Activated CD4-positive, alpha-beta T cell treated with anti-CD3 and anti-CD28 coated beads for 36 hours (primary cell): ENCODE measurements at regions of chr18 and their contacts with region 1.

Region 1: DNA sequence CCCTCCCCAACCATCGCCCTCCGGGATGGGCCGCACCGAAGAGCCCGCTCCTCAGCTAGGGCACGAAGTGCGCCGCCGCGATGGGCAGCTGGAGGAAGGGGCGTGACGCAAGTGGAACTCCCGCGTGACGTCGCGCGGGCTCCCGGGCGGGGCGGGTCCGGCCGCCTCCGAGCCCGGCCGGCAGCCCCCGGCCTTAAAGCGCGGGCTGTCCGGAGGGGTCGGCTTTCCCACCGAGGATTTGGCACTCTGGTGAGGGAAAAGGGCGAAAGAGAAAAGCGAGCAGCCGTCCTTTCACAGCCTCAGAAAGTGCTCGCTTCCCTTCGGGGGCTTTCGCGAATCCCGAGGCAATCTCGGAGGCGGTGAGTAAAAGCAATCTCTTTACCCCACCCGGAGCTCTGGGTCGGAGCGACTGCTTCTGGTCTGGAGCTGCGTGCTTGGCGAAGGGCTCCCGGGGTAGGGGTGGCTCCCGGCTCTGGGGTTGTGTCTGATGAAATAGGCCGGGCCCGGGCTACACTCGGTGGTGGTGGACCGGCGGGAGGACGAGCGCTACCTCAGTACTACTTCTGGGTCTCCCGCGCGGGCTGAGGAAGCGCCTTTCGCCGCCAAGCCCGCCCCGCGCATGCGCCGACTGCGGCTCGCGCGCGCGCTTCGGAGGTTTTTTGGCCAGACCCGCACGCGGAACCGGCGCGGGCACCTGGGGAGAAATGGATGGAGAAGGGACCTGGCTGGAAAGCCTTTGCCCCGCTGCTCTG is at the start of gene RBBP8:
- DNase-seq: peak; percentile 89
- ATAC-seq: peak; percentile 76
- H3K4me3 Mint-ChIP-seq: peak within 1 kb of the TSS; percentile 89
- H3K27ac Mint-ChIP-seq: peak within 1 kb of the TSS; percentile 96
- H3K4me1 Mint-ChIP-seq: peaks cover 17% of the 10 kb centered on the region
- H3K27me3 Mint-ChIP-seq: no peaks in the 10 kb centered on the region
- total RNA-seq, gene RBBP8: 74.3 to 101 TPM

Region 2: GRCh38 chr18:21111341-21112139 is 1821.8 kb before region 1 on chr18 and contains the start of gene ROCK1:
- CTCF ChIA-PET with region 1: no interaction called
- POLR2A ChIA-PET with region 1: no interaction called
- intact Hi-C with region 1: loop called in 1 of 2 experiments (anchors 5 kb)
- DNase-seq: peak; percentile 99
- ATAC-seq: peak; percentile 86
- H3K4me3 Mint-ChIP-seq: no peak within 1 kb of the TSS
- H3K27ac Mint-ChIP-seq: peak within 1 kb of the TSS; percentile 98
- H3K4me1 Mint-ChIP-seq: peaks cover 3% of the 10 kb centered on the region
- H3K27me3 Mint-ChIP-seq: no peaks in the 10 kb centered on the region
- total RNA-seq, gene ROCK1: 47.1 to 55.5 TPM

Region 3: GRCh38 chr18:22813648-22814328 is 119.6 kb before region 1 on chr18:
- CTCF ChIA-PET with region 1: interaction called, 6 read pairs
- POLR2A ChIA-PET with region 1: no interaction called
- intact Hi-C with region 1: loop called in 1 of 2 experiments (anchors 2 kb)
- DNase-seq: peak; percentile 19
- ATAC-seq: no peak
- H3K4me3 Mint-ChIP-seq: no peak overlapping the region
- H3K27ac Mint-ChIP-seq: no peak overlapping the region
- H3K4me1 Mint-ChIP-seq: no peaks in the 10 kb centered on the region
- H3K27me3 Mint-ChIP-seq: peaks cover 21% of the 10 kb centered on the region

Region 4: DNA sequence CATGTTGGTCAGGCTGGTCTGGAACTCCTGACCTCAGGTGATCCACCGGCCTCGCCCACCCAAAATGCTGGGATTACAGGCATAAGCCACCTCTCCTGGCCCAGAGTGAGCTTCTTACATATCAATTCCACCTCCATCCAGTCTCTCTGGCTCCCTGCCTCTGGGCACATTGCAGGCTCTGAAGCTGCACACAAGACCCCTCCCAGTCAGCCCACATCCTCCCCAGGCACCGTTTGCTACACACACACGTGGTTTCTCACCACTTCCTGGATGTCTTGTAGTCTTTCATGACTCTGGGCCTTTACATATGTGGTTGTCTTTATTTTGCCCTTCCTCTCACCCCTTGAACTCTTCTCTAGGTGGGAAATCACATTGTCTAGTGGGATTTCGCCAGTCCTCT is 137.9 kb after region 1 on chr18:
- CTCF ChIA-PET with region 1: no interaction called
- POLR2A ChIA-PET with region 1: no interaction called
- intact Hi-C with region 1: loop called in 1 of 2 experiments (anchors 2 kb)
- DNase-seq: peak; percentile 84
- ATAC-seq: peak; percentile 96
- H3K4me3 Mint-ChIP-seq: peak overlapping the region; percentile 34
- H3K27ac Mint-ChIP-seq: peak overlapping the region; percentile 86
- H3K4me1 Mint-ChIP-seq: peaks cover 55% of the 10 kb centered on the region
- H3K27me3 Mint-ChIP-seq: no peaks in the 10 kb centered on the region

Region 5: GRCh38 chr18:23412351-23412964 is 479.1 kb after region 1 on chr18:
- CTCF ChIA-PET with region 1: interaction called, 3 read pairs
- POLR2A ChIA-PET with region 1: no interaction called
- intact Hi-C with region 1: loop called in 1 of 2 experiments (anchors 2 kb)
- DNase-seq: no peak
- ATAC-seq: no peak
- H3K4me3 Mint-ChIP-seq: no peak overlapping the region
- H3K27ac Mint-ChIP-seq: no peak overlapping the region
- H3K4me1 Mint-ChIP-seq: no peaks in the 10 kb centered on the region
- H3K27me3 Mint-ChIP-seq: no peaks in the 10 kb centered on the region

Region 6: GRCh38 chr18:23503038-23503962 is 569.9 kb after region 1 on chr18 and contains the start of gene RMC1:
- CTCF ChIA-PET with region 1: no interaction called
- POLR2A ChIA-PET with region 1: no interaction called
- intact Hi-C with region 1: loop called in 1 of 2 experiments (anchors 2 kb)
- DNase-seq: peak; percentile 99
- ATAC-seq: peak; percentile 91
- H3K4me3 Mint-ChIP-seq: peak within 1 kb of the TSS; percentile 94
- H3K27ac Mint-ChIP-seq: peak within 1 kb of the TSS; percentile 94
- H3K4me1 Mint-ChIP-seq: peaks cover 38% of the 10 kb centered on the region
- H3K27me3 Mint-ChIP-seq: no peaks in the 10 kb centered on the region
- total RNA-seq, gene RMC1: 28.7 to 29.8 TPM